Uterus (tissue), 4 donors: ENCODE measurements at regions of chr1 and their contacts with region 1.

Region 1: DNA sequence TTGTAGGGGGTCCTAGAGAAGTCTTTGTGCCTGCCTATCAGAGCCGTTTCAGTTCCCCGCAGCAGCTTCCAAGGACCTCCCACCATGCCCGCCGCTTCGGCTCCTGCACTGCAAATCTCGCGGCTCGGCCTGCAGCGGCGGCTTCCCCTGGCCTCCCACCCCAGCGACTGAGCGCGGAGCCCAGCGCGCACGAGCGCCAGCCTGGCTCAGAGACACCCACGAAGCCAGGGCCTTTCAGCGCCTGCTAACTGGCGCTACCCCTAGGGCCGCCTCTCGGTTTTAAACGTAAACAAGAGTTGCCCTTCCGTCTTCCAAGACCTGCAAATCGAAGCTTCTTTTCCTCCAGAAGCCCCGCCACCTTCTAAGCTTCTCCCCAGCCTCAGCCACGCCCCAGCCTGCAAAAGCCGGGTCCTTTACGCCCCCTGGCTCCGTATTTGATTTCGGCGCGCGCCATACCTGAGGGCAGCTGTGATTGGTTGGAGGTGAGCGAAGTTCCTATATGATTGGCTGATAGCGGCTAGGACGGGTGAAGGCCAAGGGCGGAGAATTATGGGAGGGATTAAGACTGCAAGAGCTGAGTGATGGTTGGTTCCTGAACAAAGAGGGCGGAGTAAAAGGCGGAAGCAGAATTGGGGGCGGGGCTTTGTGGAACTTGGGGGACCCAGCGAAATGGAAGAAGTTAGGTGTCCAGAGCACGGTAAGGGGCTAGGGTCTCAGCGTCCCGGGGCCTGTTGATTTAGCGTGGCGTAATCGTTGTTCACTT is at the start of gene TTF2:
- DNase-seq: peak; percentile 92 to 95
- H3K4me3 ChIP-seq: peak within 1 kb of the TSS; percentile 57 to 58
- H3K27ac ChIP-seq: peak within 1 kb of the TSS in 1 of 2 donors; percentile 58
- H3K4me1 ChIP-seq: peaks cover 0 to 5% of the 10 kb centered on the region in 2 donors
- H3K27me3 ChIP-seq: no peaks in the 10 kb centered on the region
- CTCF ChIP-seq: peak in 3 of 4 experiments; percentile 21 to 46 (median 41)
- POLR2A ChIP-seq: no peak
- total RNA-seq, gene TTF2: 8.2 to 56.4 (median 17.0) TPM

Region 2: GRCh38 chr1:116570358-116571200 is 489.3 kb before region 1 on chr1 and contains the start of gene CD58:
- intact Hi-C with region 1: loop called (anchors 10 kb)
- DNase-seq: peak; percentile 83 to 87
- H3K4me3 ChIP-seq: peak within 1 kb of the TSS; percentile 62 to 82
- H3K27ac ChIP-seq: peak within 1 kb of the TSS; percentile 94 to 95
- H3K4me1 ChIP-seq: no peaks in the 10 kb centered on the region
- H3K27me3 ChIP-seq: no peaks in the 10 kb centered on the region
- CTCF ChIP-seq: peak; percentile 36 to 75 (median 59)
- POLR2A ChIP-seq: peak; percentile 47 to 71
- total RNA-seq, gene CD58: 22.3 to 79.7 (median 24.4) TPM

Region 3: DNA sequence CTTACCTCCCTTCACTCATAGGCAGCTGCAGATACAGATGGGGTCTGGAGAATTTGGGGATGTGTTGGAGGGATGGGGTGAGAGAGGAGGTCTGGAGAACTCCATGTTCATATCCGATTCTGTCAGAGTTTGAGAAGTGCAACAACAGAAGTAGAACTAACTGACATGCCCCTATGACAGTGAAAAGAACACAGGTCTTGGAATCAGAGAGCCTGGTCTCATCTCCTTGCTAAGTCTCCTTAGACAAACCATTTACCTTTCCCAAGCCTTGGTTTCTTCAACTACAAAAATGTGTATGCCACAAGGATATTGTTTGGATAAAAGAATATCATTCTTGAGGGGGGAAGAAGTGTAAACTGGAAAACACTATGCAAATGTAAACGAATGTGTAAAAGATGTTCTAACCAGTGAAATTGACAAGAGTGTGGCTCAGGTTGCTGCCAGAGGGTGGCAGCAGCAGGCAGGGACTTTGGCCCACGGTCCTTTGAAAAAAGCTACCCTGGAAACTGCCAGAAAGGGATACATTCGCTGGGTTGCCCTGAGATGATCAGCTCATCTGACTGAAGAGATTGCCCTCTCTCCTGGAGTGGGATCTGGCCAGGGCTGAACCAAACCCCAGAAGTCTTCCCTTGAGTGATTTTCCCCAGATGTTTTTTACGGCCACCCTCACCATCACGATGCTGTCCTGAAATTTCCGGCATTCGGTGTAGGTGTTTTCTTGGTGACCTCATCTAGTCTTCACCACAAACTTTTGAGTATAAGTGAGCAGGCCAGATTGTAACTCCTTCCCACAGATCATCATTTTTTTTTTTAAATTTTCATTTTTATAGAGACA is 322.6 kb before region 1 on chr1:
- intact Hi-C with region 1: loop called (anchors 5 kb)
- DNase-seq: peak; percentile 38 to 67
- H3K4me3 ChIP-seq: no peak overlapping the region
- H3K27ac ChIP-seq: no peak overlapping the region
- H3K4me1 ChIP-seq: no peaks in the 10 kb centered on the region
- H3K27me3 ChIP-seq: no peaks in the 10 kb centered on the region
- CTCF ChIP-seq: peak; percentile 65 to 75 (median 72)
- POLR2A ChIP-seq: no peak

Region 4: DNA sequence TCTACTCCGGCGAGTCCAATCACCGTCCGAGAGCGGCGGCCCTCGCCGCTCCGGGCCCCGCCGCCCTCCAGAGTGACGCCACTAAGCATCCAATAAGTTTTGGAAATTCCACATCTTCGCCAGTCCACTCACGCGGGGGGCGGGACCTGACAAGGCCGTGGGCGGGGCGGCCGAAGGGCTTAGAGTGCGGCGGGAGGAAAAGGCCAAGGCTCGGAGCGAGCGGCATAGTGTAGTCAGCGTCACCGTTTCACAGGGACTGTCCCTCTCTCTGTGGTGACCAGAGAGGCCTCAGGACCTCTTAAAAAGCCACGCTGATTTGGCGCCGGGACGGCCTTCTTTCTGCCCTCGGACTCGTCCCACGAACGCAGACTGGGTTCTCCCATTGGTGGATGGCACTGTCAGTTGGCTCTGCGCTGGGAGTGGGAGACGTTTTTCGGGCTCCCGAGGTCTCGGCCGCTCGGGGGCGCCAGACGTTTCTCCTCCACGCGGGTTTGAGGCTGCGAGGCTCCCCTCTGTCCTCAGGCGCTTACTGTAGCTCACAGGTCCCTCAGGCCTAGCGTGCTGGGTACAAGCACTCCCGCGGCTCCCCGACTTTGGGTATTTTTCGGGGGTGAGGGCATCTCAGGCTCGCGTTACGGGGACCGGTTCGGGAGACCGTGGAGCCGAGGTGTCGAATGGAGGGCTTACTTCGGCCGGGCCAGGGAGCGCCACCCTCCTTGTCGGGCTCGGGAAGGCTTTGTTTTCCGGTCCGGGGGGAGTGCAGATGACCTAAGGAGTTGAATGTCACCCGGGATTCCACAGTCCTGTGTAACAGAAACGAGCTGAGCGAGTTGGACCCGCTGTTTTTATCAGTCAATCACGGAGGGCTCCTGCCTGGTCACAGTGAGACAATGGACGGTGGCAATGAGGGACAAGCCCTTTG is 62.2 kb after region 1 on chr1:
- intact Hi-C with region 1: loop called (anchors 5 kb)
- DNase-seq: peak; percentile 96 to 97
- H3K4me3 ChIP-seq: peak overlapping the region; percentile 65 to 91
- H3K27ac ChIP-seq: peak overlapping the region; percentile 91 to 93
- H3K4me1 ChIP-seq: no peaks in the 10 kb centered on the region
- H3K27me3 ChIP-seq: no peaks in the 10 kb centered on the region
- CTCF ChIP-seq: peak; percentile 65 to 81 (median 72)
- POLR2A ChIP-seq: peak in 1 of 2 donors; percentile 50